ENCODE measurements at regions of chr12 and their contacts with region 1.

Region 1: DNA sequence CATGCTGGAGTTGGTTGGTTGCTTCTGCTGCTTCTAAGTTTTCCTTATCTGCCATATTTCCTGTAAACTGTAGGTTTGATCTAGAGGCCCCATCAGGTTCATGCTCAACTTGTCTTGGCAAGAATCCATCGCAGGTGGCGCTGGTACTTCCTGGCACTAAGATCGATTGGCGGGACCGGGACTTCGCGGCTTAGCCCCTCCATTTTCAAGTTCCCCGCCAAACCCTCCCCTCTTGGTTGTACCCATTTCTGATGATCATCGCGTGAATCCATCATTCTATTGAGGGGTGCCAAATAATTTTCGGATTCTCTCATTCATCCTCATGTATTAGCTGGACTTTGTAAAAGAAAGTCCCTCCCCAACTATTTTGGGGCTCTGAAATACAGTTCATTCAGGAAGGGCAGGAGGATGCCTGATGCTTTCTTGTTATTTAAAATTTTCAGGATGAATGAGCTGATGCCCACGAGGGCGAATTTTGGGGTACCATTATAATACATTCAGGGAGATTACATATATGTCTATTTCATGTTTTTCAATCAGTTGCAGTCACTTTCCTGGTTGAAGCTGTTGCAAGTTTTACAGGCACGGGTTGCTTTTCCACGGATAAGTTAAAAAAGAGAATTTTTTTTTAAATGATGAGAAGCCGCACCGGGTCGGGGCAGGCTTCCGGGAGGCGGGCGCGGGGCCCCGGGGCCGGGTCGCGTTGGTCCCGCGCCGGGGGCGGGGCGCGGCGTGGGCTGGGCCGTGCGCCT is 395 bp upstream of the BRI3BP start:
- DNase-seq: peak; percentile 93
- ATAC-seq: peak; percentile 62
- H3K4me3 Mint-ChIP-seq: peak overlapping the region; percentile 81
- H3K27ac Mint-ChIP-seq: peak overlapping the region; percentile 99
- H3K4me1 Mint-ChIP-seq: peaks cover 25% of the 10 kb centered on the region
- H3K27me3 Mint-ChIP-seq: no peaks in the 10 kb centered on the region

Region 2: GRCh38 chr12:124567661-124568373 is 425.2 kb before region 1 on chr12:
- CTCF ChIA-PET with region 1: no interaction called
- POLR2A ChIA-PET with region 1: no interaction called
- intact Hi-C with region 1: loop called in 1 of 2 experiments (anchors 2 kb)
- DNase-seq: peak; percentile 89
- ATAC-seq: peak; percentile 72
- H3K4me3 Mint-ChIP-seq: peak overlapping the region; percentile 75
- H3K27ac Mint-ChIP-seq: peak overlapping the region; percentile 89
- H3K4me1 Mint-ChIP-seq: peaks cover 33% of the 10 kb centered on the region
- H3K27me3 Mint-ChIP-seq: no peaks in the 10 kb centered on the region

Region 3: GRCh38 chr12:124863416-124864325 is 129.4 kb before region 1 on chr12 and contains the start of gene SCARB1:
- CTCF ChIA-PET with region 1: no interaction called
- POLR2A ChIA-PET with region 1: no interaction called
- intact Hi-C with region 1: loop called in 1 of 2 experiments (anchors 1 kb)
- DNase-seq: peak; percentile 91
- ATAC-seq: peak; percentile 91
- H3K4me3 Mint-ChIP-seq: peak within 1 kb of the TSS; percentile 76
- H3K27ac Mint-ChIP-seq: peak within 1 kb of the TSS; percentile 89
- H3K4me1 Mint-ChIP-seq: peaks cover 21% of the 10 kb centered on the region
- H3K27me3 Mint-ChIP-seq: peaks cover 3% of the 10 kb centered on the region
- total RNA-seq, gene SCARB1: 22.9 to 24.1 TPM

Region 4: GRCh38 chr12:124906606-124907261 is 86.3 kb before region 1 on chr12:
- CTCF ChIA-PET with region 1: no interaction called
- POLR2A ChIA-PET with region 1: interaction called, 3 read pairs
- intact Hi-C with region 1: loop called in 1 of 2 experiments (anchors 2 kb)
- DNase-seq: peak; percentile 93
- ATAC-seq: peak; percentile 88
- H3K4me3 Mint-ChIP-seq: no peak overlapping the region
- H3K27ac Mint-ChIP-seq: peak overlapping the region; percentile 28
- H3K4me1 Mint-ChIP-seq: peaks cover 25% of the 10 kb centered on the region
- H3K27me3 Mint-ChIP-seq: no peaks in the 10 kb centered on the region

Region 5: GRCh38 chr12:124940549-124941527 is 52.2 kb before region 1 on chr12:
- CTCF ChIA-PET with region 1: interaction called, 3 read pairs
- POLR2A ChIA-PET with region 1: no interaction called
- intact Hi-C with region 1: loop called (anchors 1 to 2 kb)
- DNase-seq: peak; percentile 95
- ATAC-seq: peak; percentile 39
- H3K4me3 Mint-ChIP-seq: no peak overlapping the region
- H3K27ac Mint-ChIP-seq: no peak overlapping the region
- H3K4me1 Mint-ChIP-seq: peaks cover 11% of the 10 kb centered on the region
- H3K27me3 Mint-ChIP-seq: no peaks in the 10 kb centered on the region

Region 6: DNA sequence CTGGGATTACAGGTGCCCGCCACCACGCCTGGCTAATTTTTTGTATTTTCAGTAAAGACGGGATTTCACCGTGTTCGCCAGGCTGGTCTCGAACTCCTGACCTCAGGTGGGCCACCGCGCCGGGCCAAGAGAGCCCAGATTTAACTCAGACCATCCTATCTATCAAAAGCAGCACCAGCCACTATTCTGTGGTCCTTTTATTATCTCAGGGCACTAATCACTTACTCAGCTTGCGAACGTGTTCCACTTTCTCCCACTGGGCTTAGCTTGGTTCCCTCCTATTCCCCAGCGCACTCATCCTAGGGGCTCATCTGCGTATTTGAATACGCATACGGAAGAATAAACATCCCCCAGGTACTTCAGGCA is 56.0 kb after region 1 on chr12:
- CTCF ChIA-PET with region 1: interaction called, 5 read pairs
- POLR2A ChIA-PET with region 1: interaction called, 6 read pairs
- intact Hi-C with region 1: loop called (anchors 1 kb)
- DNase-seq: no peak
- ATAC-seq: no peak
- H3K4me3 Mint-ChIP-seq: peak overlapping the region; percentile 75
- H3K27ac Mint-ChIP-seq: no peak overlapping the region
- H3K4me1 Mint-ChIP-seq: peaks cover 8% of the 10 kb centered on the region
- H3K27me3 Mint-ChIP-seq: no peaks in the 10 kb centered on the region

Region 7: DNA sequence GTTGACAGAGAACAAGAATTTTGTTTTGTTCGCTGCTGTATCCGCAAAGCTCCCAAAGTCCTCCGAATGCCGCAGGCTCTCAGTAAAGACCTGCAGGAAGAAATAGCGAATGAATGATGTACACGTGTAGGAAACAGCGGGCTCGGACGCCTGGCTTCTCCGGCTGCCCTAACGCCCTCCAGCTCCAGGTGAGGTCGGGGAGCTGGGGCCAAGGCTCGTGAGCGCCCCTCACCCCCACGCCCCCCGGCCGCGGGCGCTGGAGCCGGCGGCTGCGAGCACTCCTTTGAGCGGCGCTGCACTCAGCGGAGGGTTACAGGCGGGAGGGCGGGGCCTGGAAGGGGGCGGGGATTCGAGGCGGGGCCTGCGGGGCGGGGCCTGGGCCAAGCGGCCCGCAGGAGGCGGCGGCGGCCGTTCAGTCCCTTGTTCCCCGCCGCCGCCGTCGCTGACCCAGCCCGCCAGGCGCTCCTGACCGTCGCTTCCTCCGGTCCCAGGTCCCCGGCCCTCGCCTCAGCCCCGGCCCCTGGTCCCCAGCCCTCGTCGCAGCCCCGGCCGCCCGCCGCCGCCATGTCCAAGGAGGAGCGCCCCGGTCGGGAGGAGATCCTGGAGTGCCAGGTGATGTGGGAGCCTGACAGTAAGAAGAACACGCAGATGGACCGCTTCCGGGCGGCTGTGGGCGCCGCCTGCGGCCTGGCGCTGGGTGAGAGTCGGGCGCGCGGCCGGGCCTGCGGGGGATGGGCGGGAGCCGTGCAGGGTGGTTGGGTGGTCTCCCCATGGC is 72.2 kb after region 1 on chr12 and contains the start of gene AACS:
- CTCF ChIA-PET with region 1: no interaction called
- POLR2A ChIA-PET with region 1: no interaction called
- intact Hi-C with region 1: loop called (anchors 1 to 2 kb)
- DNase-seq: peak; percentile 89
- ATAC-seq: peak; percentile 98
- H3K4me3 Mint-ChIP-seq: peak within 1 kb of the TSS; percentile 71
- H3K27ac Mint-ChIP-seq: peak within 1 kb of the TSS; percentile 37
- H3K4me1 Mint-ChIP-seq: peaks cover 13% of the 10 kb centered on the region
- H3K27me3 Mint-ChIP-seq: peaks cover 8% of the 10 kb centered on the region
- total RNA-seq, gene AACS: 13.9 to 16.6 TPM

Region 8: DNA sequence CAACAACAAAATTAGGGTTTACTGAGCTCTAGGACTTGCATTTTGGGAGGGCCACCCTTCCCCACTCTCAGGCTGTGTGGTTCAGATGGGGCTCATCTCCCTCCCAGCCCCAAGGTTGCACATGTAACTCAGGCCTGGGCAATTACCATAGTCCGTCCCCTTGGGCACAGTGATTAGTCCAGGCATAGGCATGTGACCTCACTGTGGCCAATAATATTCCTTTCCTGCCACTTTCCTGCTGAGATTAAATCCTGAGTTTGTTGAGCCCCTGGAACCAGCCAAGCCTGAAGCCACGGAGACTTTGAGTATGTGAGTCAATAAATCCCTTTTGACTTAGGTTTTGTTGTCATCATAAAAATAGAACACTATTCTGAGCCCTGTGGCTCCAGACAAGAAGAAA is 185.2 kb after region 1 on chr12:
- CTCF ChIA-PET with region 1: no interaction called
- POLR2A ChIA-PET with region 1: no interaction called
- intact Hi-C with region 1: no loop called
- DNase-seq: no peak
- ATAC-seq: no peak
- H3K4me3 Mint-ChIP-seq: no peak overlapping the region
- H3K27ac Mint-ChIP-seq: no peak overlapping the region
- H3K4me1 Mint-ChIP-seq: peaks cover 2% of the 10 kb centered on the region
- H3K27me3 Mint-ChIP-seq: peaks cover 36% of the 10 kb centered on the region

Measured in activated CD4-positive, alpha-beta T cell treated with anti-CD3 and anti-CD28 coated beads for 36 hours (primary cell).